B cell (primary cell): ENCODE measurements at regions of chr12 and their contacts with region 1.

Region 1: GRCh38 chr12:111330800-111331752 is 37.8 kb downstream of the PHETA1 start:
- DNase-seq: peak; percentile 57
- ATAC-seq: peak; percentile 45
- H3K4me3 ChIP-seq: no peak overlapping the region
- H3K4me3 Mint-ChIP-seq: no peak overlapping the region
- H3K27ac ChIP-seq: no peak overlapping the region
- H3K27ac Mint-ChIP-seq: no peak overlapping the region
- H3K4me1 ChIP-seq: peaks cover 0 to 4% of the 10 kb centered on the region in 2 donors
- H3K4me1 Mint-ChIP-seq: no peaks in the 10 kb centered on the region
- H3K27me3 ChIP-seq: peaks cover 0 to 5% (median 0%) of the 10 kb centered on the region in 4 experiments
- H3K27me3 Mint-ChIP-seq: peaks cover 8% of the 10 kb centered on the region
- CTCF ChIP-seq: peak; percentile 59

Region 2: DNA sequence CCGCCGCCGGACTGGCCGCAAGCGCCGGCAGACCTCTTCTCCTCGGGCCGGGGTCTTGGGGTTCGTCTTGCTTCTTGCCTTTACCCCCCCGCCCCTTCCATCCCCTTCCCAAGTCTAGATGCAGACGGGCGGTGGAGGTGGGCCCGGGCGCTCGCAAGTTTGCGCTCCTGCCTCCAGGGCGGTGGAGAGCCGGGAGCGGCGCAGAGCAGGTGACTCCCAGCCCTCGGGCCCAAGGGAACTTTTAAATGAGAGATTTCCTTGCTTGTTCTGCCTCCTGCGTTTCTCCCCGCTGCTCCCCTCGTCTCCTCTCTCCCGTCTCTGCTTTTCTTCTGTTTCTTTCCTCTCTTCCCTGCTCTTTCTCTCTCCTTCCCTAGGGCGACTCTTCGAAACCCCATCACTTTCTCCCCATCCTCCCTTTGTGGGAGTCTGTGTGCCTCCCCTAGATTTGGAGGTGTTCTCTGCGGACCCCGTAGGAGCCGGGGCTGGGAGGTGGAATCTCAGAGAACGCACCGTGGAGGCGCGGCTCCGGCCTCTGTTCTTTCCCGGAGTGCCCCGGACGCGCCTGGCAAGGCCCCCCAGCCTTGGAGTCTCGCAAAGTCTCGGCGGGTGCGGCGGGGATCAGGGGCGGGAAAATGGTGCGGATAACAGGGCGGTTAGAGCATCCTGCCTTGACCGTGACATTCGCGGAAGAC is 296.0 kb before region 1 on chr12:
- CTCF ChIA-PET with region 1: no interaction called
- POLR2A ChIA-PET with region 1: no interaction called
- intact Hi-C with region 1: no loop called
- DNase-seq: peak; percentile 13
- ATAC-seq: no peak
- H3K4me3 ChIP-seq: no peak overlapping the region
- H3K4me3 Mint-ChIP-seq: peak overlapping the region; percentile 56
- H3K27ac ChIP-seq: no peak overlapping the region
- H3K27ac Mint-ChIP-seq: no peak overlapping the region
- H3K4me1 ChIP-seq: peaks cover 18 to 22% of the 10 kb centered on the region in 2 donors
- H3K4me1 Mint-ChIP-seq: peaks cover 18% of the 10 kb centered on the region
- H3K27me3 ChIP-seq: peaks cover 0 to 63% (median 36%) of the 10 kb centered on the region in 4 experiments
- H3K27me3 Mint-ChIP-seq: peaks cover 67% of the 10 kb centered on the region
- CTCF ChIP-seq: no peak

Region 3: DNA sequence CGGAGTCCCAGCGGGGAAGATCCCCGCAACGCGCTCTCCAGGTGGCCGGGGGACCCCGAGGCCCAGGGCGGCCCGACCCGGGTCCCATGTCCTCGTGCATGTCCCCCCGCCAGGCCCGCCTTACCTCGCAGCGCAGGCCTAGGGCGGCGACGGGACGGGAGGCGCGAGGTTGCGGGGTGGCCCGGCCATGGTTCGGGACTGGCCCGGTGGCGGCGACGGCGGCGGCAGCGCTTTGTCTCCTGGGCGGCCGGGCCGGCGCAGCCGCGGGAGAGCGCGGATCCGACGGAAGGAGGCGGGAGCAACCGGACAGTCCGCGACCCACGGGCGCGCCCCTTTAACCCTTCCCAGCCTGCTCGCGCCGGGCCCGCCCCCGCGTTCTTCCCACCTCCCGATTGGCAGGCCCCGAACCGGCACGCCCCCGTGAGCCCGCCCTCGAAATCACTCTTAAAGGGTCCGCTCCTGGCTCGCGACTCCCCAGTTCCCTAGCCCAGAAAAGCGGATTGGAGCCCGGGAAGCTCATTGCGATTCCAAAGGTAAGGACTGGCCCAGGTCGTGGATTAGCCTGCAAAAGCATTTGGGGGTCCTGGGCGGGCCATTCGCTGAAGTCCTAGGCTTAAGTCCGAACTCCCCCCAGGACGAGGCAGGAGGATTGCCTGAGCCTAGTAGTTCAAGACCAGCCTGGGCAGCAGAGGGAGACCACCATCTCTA is 37.9 kb after region 1 on chr12 and contains the start of gene PHETA1:
- CTCF ChIA-PET with region 1: interaction called, 6 read pairs
- POLR2A ChIA-PET with region 1: no interaction called
- intact Hi-C with region 1: loop called (anchors 2 kb)
- DNase-seq: peak; percentile 78
- ATAC-seq: peak; percentile 98
- H3K4me3 ChIP-seq: peak within 1 kb of the TSS; percentile 46 to 73 (median 70)
- H3K4me3 Mint-ChIP-seq: peak within 1 kb of the TSS; percentile 90
- H3K27ac ChIP-seq: peak within 1 kb of the TSS; percentile 3 to 54
- H3K27ac Mint-ChIP-seq: peak within 1 kb of the TSS; percentile 72
- H3K4me1 ChIP-seq: peaks cover 20 to 25% of the 10 kb centered on the region in 2 donors
- H3K4me1 Mint-ChIP-seq: peaks cover 35% of the 10 kb centered on the region
- H3K27me3 ChIP-seq: no peaks in the 10 kb centered on the region
- H3K27me3 Mint-ChIP-seq: no peaks in the 10 kb centered on the region
- CTCF ChIP-seq: no peak
- total RNA-seq, gene PHETA1: 9.4 and 12.1 TPM in 2 replicates

Region 4: GRCh38 chr12:111529424-111530368 is 198.6 kb after region 1 on chr12:
- CTCF ChIA-PET with region 1: interaction called, 11 read pairs
- POLR2A ChIA-PET with region 1: no interaction called
- intact Hi-C with region 1: no loop called
- DNase-seq: peak; percentile 78
- ATAC-seq: peak; percentile 76
- H3K4me3 ChIP-seq: no peak overlapping the region
- H3K4me3 Mint-ChIP-seq: no peak overlapping the region
- H3K27ac ChIP-seq: no peak overlapping the region
- H3K27ac Mint-ChIP-seq: no peak overlapping the region
- H3K4me1 ChIP-seq: no peaks in the 10 kb centered on the region
- H3K4me1 Mint-ChIP-seq: no peaks in the 10 kb centered on the region
- H3K27me3 ChIP-seq: no peaks in the 10 kb centered on the region
- H3K27me3 Mint-ChIP-seq: no peaks in the 10 kb centered on the region
- CTCF ChIP-seq: peak; percentile 85

Region 5: GRCh38 chr12:111788178-111788654 is 457.1 kb after region 1 on chr12:
- CTCF ChIA-PET with region 1: no interaction called
- POLR2A ChIA-PET with region 1: no interaction called
- intact Hi-C with region 1: no loop called
- DNase-seq: peak; percentile 40
- ATAC-seq: peak; percentile 62
- H3K4me3 ChIP-seq: no peak overlapping the region
- H3K4me3 Mint-ChIP-seq: no peak overlapping the region
- H3K27ac ChIP-seq: no peak overlapping the region
- H3K27ac Mint-ChIP-seq: no peak overlapping the region
- H3K4me1 ChIP-seq: no peaks in the 10 kb centered on the region
- H3K4me1 Mint-ChIP-seq: no peaks in the 10 kb centered on the region
- H3K27me3 ChIP-seq: no peaks in the 10 kb centered on the region
- H3K27me3 Mint-ChIP-seq: no peaks in the 10 kb centered on the region
- CTCF ChIP-seq: peak; percentile 52